ENCODE measurements at regions of chr7 and their contacts with region 1.

Region 1: GRCh38 chr7:77759294-77759889 is 38.8 kb downstream of the TMEM60 start:
- DNase-seq: no peak
- H3K4me3 ChIP-seq: no peak overlapping the region
- H3K27ac ChIP-seq: peak overlapping the region in 4 of 8 donors; percentile 10 to 47 (median 15)
- H3K4me1 ChIP-seq: peaks cover 17 to 84% (median 52%) of the 10 kb centered on the region in 6 donors
- H3K27me3 ChIP-seq: no peaks in the 10 kb centered on the region
- CTCF ChIP-seq: peak; percentile 63 to 85 (median 78)
- POLR2A ChIP-seq: no peak

Region 2: DNA sequence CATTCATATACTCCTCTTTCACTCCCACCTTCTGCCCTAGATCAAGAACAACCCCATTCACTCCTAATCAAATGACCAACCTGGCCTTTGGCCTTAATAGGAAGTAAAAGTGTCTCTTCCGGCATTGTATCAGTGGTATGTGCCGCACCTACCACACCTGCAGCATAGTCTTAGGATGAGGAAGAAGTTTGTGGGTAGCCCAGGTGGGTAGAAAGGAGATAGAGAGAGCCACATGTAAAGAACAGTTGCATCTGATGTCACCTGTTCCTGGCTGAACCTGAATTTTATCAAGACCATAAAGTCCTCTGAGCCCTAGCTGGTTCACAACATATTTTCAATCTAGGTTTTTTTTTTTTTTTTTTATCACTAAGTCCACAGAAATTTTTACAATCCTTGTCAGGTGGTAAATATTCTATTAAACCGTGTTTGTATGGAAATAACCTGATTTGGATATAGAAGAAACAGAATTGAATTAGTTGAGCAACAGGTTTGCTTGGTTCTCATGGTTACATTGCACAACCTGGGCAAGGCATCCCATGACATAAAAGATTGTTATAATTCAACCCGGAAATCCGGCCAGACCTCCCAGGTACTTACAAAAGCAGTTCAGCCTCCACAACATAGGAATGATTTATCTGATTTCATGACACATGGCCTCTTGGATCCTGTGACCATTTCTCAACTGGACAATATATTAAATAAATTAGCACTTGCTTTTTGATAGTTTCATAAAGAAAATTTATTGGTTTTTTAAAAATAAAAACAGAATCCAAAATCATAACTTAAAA is 277.6 kb before region 1 on chr7:
- intact Hi-C with region 1: no loop called
- DNase-seq: no peak
- H3K4me3 ChIP-seq: no peak overlapping the region
- H3K27ac ChIP-seq: peak overlapping the region in 4 of 8 donors; percentile 6 to 68 (median 27)
- H3K4me1 ChIP-seq: peaks cover 0 to 18% (median 0%) of the 10 kb centered on the region in 6 donors
- H3K27me3 ChIP-seq: no peaks in the 10 kb centered on the region
- CTCF ChIP-seq: no peak
- POLR2A ChIP-seq: no peak

Region 3: GRCh38 chr7:77651573-77652162 is 107.7 kb before region 1 on chr7:
- intact Hi-C with region 1: loop called (anchors 5 kb)
- DNase-seq: no peak
- H3K4me3 ChIP-seq: no peak overlapping the region
- H3K27ac ChIP-seq: no peak overlapping the region
- H3K4me1 ChIP-seq: peaks cover 0 to 17% (median 3%) of the 10 kb centered on the region in 6 donors
- H3K27me3 ChIP-seq: no peaks in the 10 kb centered on the region
- CTCF ChIP-seq: peak; percentile 19 to 73 (median 59)
- POLR2A ChIP-seq: no peak

Region 4: GRCh38 chr7:77674878-77675277 is 84.5 kb before region 1 on chr7:
- intact Hi-C with region 1: no loop called
- DNase-seq: no peak
- H3K4me3 ChIP-seq: no peak overlapping the region
- H3K27ac ChIP-seq: no peak overlapping the region
- H3K4me1 ChIP-seq: no peaks in the 10 kb centered on the region
- H3K27me3 ChIP-seq: no peaks in the 10 kb centered on the region
- CTCF ChIP-seq: no peak
- POLR2A ChIP-seq: no peak

Region 5: DNA sequence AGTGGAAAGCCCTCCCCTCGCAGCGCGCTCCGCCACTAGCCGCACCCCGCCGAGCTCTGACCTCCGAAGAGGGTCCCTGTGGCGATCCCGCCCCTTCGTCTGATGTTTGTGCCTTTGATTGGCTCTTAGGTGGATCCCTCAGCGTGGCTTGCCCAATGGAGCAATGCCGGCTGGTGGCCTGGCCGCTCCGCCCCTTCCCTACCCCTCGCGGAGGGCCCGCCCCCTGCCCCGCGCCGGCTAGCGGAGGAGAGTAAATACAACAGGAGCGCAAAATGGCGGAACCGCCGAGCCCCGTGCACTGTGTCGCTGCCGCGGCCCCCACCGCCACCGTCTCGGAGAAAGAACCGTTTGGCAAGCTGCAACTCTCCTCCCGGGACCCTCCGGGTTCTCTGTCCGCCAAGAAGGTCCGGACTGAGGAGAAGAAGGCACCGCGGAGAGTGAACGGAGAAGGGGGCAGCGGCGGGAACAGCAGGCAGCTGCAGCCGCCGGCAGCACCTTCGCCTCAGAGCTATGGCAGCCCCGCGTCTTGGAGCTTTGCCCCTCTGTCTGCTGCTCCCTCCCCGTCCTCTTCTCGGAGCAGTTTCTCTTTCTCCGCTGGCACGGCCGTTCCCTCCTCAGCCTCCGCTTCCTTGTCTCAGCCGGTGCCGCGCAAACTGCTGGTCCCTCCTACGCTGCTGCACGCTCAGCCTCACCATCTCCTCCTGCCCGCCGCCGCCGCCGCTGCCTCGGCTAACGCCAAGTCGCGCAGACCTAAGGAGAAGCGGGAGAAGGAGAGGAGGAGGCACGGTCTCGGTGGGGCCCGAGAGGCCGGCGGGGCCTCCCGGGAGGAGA is 63.0 kb before region 1 on chr7 and contains the start of gene RSBN1L:
- intact Hi-C with region 1: loop called (anchors 10 kb)
- DNase-seq: peak; percentile 99
- H3K4me3 ChIP-seq: peak within 1 kb of the TSS; percentile 78 to 100 (median 97)
- H3K27ac ChIP-seq: peak within 1 kb of the TSS; percentile 79 to 99 (median 96)
- H3K4me1 ChIP-seq: peaks cover 26 to 78% (median 59%) of the 10 kb centered on the region in 6 donors
- H3K27me3 ChIP-seq: no peaks in the 10 kb centered on the region
- CTCF ChIP-seq: peak; percentile 33 to 82 (median 61)
- POLR2A ChIP-seq: peak in 2 of 3 donors; percentile 46 to 70
- total RNA-seq, gene RSBN1L: 25.5 to 32.5 (median 29.0) TPM

Measured in spleen (tissue), 13 donors.